Mammary epithelial cell (primary cell): ENCODE measurements at regions of chr16 and their contacts with region 1.

Region 1: GRCh38 chr16:65153365-65154105 is 31.7 kb upstream of the CDH11 start:
- DNase-seq: no peak
- H3K4me3 ChIP-seq: no peak overlapping the region
- H3K27ac ChIP-seq: no peak overlapping the region
- H3K4me1 ChIP-seq: no peaks in the 10 kb centered on the region
- H3K27me3 ChIP-seq: peaks cover 2% of the 10 kb centered on the region
- CTCF ChIP-seq: no peak

Region 2: GRCh38 chr16:65202461-65202860 is 48.9 kb after region 1 on chr16:
- CTCF ChIA-PET with region 1: no interaction called
- dilution Hi-C with region 1: no loop called
- in situ Hi-C with region 1: no loop called
- intact Hi-C with region 1: no loop called
- DNase-seq: no peak
- H3K4me3 ChIP-seq: no peak overlapping the region
- H3K27ac ChIP-seq: no peak overlapping the region
- H3K4me1 ChIP-seq: peaks cover 9% of the 10 kb centered on the region
- H3K27me3 ChIP-seq: no peaks in the 10 kb centered on the region
- CTCF ChIP-seq: no peak

Region 3: GRCh38 chr16:66247516-66248481 is 1094.3 kb after region 1 on chr16:
- CTCF ChIA-PET with region 1: interaction called, 22 read pairs
- dilution Hi-C with region 1: no loop called
- in situ Hi-C with region 1: no loop called
- intact Hi-C with region 1: no loop called
- DNase-seq: no peak
- H3K4me3 ChIP-seq: no peak overlapping the region
- H3K27ac ChIP-seq: no peak overlapping the region
- H3K4me1 ChIP-seq: peaks cover 13% of the 10 kb centered on the region
- H3K27me3 ChIP-seq: no peaks in the 10 kb centered on the region
- CTCF ChIP-seq: no peak